Heart left ventricle (tissue), 16 donors: ENCODE measurements at regions of chr5 and their contacts with region 1.

Region 1: GRCh38 chr5:144697847-144698262 is 527.2 kb downstream of the KCTD16 start:
- DNase-seq: no peak
- ATAC-seq: no peak
- H3K4me3 ChIP-seq: no peak overlapping the region
- H3K27ac ChIP-seq: no peak overlapping the region
- H3K4me1 ChIP-seq: no peaks in the 10 kb centered on the region
- H3K27me3 ChIP-seq: peaks cover 0 to 9% (median 0%) of the 10 kb centered on the region in 9 donors
- CTCF ChIP-seq: no peak
- POLR2A ChIP-seq: no peak

Region 2: DNA sequence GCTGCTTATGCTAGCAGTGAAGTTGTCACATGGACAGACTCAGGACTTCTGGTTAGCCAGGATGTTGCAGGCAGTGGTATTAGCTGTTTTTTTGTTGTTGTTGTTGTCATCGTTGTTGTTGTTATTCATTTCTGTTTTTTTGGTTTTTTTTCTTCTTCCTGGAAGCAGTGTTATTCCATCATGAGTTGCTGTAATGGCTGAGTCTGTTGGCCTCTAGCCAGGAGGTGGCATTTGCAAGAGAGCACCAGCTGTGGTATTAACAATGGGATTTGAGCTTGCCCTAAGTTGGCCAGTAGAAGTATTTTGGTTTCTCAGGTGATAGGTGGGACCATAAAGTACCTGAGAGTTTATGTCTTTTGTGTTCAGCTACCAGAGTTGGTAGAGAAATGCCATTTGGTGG is 33.9 kb after region 1 on chr5:
- intact Hi-C with region 1: loop called in 1 of 10 experiments (anchors 2 kb)
- DNase-seq: no peak
- ATAC-seq: no peak
- H3K4me3 ChIP-seq: no peak overlapping the region
- H3K27ac ChIP-seq: no peak overlapping the region
- H3K4me1 ChIP-seq: no peaks in the 10 kb centered on the region
- H3K27me3 ChIP-seq: no peaks in the 10 kb centered on the region
- CTCF ChIP-seq: no peak
- POLR2A ChIP-seq: no peak

Region 3: GRCh38 chr5:144742361-144742760 is 44.5 kb after region 1 on chr5:
- intact Hi-C with region 1: no loop called
- DNase-seq: no peak
- ATAC-seq: no peak
- H3K4me3 ChIP-seq: no peak overlapping the region
- H3K27ac ChIP-seq: no peak overlapping the region
- H3K4me1 ChIP-seq: no peaks in the 10 kb centered on the region
- H3K27me3 ChIP-seq: no peaks in the 10 kb centered on the region
- CTCF ChIP-seq: no peak
- POLR2A ChIP-seq: no peak

Region 4: DNA sequence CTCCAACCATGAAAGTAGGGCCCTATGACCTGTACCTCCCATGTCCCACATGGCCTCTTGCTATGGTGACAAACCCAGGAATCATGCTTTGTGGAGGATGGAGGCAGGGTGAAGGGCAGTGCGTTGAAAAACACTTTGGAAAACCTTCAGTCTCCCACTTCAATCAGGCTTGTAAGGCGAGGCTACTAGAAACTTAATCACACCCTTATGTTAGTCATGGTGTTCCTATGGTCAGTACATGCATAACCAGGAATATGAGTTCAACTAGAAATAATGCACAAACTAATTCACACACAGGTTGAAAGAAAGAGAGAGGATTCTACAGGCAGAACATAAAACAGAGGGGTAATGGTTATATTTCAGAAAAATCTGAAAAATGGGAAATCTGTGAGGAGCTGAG is 73.9 kb after region 1 on chr5:
- intact Hi-C with region 1: no loop called
- DNase-seq: no peak
- ATAC-seq: no peak
- H3K4me3 ChIP-seq: no peak overlapping the region
- H3K27ac ChIP-seq: no peak overlapping the region
- H3K4me1 ChIP-seq: no peaks in the 10 kb centered on the region
- H3K27me3 ChIP-seq: no peaks in the 10 kb centered on the region
- CTCF ChIP-seq: no peak
- POLR2A ChIP-seq: no peak

Region 5: GRCh38 chr5:144800169-144800568 is 102.3 kb after region 1 on chr5:
- intact Hi-C with region 1: no loop called
- DNase-seq: no peak
- ATAC-seq: no peak
- H3K4me3 ChIP-seq: no peak overlapping the region
- H3K27ac ChIP-seq: no peak overlapping the region
- H3K4me1 ChIP-seq: no peaks in the 10 kb centered on the region
- H3K27me3 ChIP-seq: no peaks in the 10 kb centered on the region
- CTCF ChIP-seq: no peak
- POLR2A ChIP-seq: no peak